CD4-positive, alpha-beta T cell (primary cell): ENCODE measurements at regions of chr15 and their contacts with region 1.

Region 1: DNA sequence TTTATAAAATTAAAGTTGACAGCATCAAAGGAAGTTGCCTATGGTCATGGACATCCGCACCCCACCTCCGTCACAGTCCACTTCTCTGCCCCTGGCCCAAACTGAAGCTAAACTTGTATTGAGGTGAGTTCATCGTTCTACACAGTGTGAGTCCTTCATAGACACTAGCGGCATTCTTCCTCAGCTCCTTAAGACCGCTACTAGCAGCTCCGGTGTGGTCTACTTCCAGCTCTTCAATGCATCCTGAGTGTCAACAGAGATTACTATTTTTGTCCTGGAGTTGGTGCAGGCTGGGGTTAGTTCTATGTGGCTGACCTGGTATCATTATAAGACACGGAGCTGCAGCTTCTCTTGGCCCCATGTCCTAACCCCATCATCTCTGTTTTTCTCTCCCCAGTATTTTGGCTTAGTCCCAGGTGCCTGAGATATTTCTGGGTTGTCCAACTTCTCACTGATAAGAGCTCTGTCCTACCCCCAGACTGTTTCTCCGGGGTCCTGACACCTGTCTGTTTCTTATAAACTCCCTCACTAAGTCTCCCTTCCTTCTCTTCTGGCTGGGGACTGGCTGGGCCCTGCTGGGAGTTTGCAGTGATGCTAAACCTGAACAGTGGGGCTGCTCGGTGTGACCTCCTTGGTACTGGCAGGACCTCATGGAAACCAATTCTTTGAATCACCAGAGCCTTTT is 169.2 kb upstream of the ATP10A start:
- DNase-seq: no peak
- ATAC-seq: no peak
- H3K4me3 ChIP-seq: no peak overlapping the region
- H3K4me3 Mint-ChIP-seq: no peak overlapping the region
- H3K27ac ChIP-seq: no peak overlapping the region
- H3K27ac Mint-ChIP-seq: no peak overlapping the region
- H3K4me1 ChIP-seq: no peaks in the 10 kb centered on the region
- H3K4me1 Mint-ChIP-seq: no peaks in the 10 kb centered on the region
- H3K27me3 ChIP-seq: no peaks in the 10 kb centered on the region
- H3K27me3 Mint-ChIP-seq: peaks cover 19% of the 10 kb centered on the region
- CTCF ChIP-seq: no peak

Region 2: GRCh38 chr15:25587616-25588340 is 444.5 kb before region 1 on chr15:
- CTCF ChIA-PET with region 1: no interaction called
- POLR2A ChIA-PET with region 1: no interaction called
- intact Hi-C with region 1: no loop called
- DNase-seq: no peak
- ATAC-seq: no peak
- H3K4me3 ChIP-seq: no peak overlapping the region
- H3K4me3 Mint-ChIP-seq: no peak overlapping the region
- H3K27ac ChIP-seq: no peak overlapping the region
- H3K27ac Mint-ChIP-seq: no peak overlapping the region
- H3K4me1 ChIP-seq: no peaks in the 10 kb centered on the region
- H3K4me1 Mint-ChIP-seq: no peaks in the 10 kb centered on the region
- H3K27me3 ChIP-seq: no peaks in the 10 kb centered on the region
- H3K27me3 Mint-ChIP-seq: peaks cover 6% of the 10 kb centered on the region
- CTCF ChIP-seq: no peak

Region 3: DNA sequence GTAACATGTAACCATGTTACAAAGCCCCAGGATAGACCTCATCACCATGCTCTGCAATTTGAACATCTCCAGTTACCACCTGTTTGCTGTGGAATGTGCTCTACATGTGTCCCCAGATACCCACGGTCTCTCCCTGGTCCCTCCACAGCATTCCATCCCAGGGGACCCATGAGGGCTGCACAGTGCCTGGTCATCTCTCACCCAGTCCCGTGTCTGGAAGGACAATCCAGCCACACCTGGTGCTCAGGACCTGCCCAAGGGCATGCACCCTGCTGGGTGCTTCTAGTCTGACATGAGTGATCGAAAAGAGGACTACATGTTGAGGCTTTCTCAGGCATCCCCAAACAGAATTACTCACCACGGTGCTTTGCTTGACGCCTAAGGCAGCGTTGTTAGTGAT is 49.6 kb before region 1 on chr15:
- CTCF ChIA-PET with region 1: no interaction called
- POLR2A ChIA-PET with region 1: no interaction called
- intact Hi-C with region 1: loop called in 1 of 2 experiments (anchors 5 kb)
- DNase-seq: no peak
- ATAC-seq: no peak
- H3K4me3 ChIP-seq: no peak overlapping the region
- H3K4me3 Mint-ChIP-seq: no peak overlapping the region
- H3K27ac ChIP-seq: no peak overlapping the region
- H3K27ac Mint-ChIP-seq: no peak overlapping the region
- H3K4me1 ChIP-seq: no peaks in the 10 kb centered on the region
- H3K4me1 Mint-ChIP-seq: no peaks in the 10 kb centered on the region
- H3K27me3 ChIP-seq: peaks cover 0 to 3% of the 10 kb centered on the region in 2 experiments
- H3K27me3 Mint-ChIP-seq: peaks cover 21% of the 10 kb centered on the region
- CTCF ChIP-seq: no peak